Right cardiac atrium (tissue), 5 donors: ENCODE measurements at regions of chr1 and their contacts with region 1.

Region 1: GRCh38 chr1:53014791-53015507 is 47.1 kb upstream of the PODN start:
- DNase-seq: peak; percentile 75 to 82 (median 82)
- ATAC-seq: peak; percentile 96 to 97
- H3K4me3 ChIP-seq: peak overlapping the region; percentile 96
- H3K27ac ChIP-seq: peak overlapping the region; percentile 66
- H3K4me1 ChIP-seq: peaks cover 2% of the 10 kb centered on the region
- H3K27me3 ChIP-seq: no peaks in the 10 kb centered on the region

Region 2: DNA sequence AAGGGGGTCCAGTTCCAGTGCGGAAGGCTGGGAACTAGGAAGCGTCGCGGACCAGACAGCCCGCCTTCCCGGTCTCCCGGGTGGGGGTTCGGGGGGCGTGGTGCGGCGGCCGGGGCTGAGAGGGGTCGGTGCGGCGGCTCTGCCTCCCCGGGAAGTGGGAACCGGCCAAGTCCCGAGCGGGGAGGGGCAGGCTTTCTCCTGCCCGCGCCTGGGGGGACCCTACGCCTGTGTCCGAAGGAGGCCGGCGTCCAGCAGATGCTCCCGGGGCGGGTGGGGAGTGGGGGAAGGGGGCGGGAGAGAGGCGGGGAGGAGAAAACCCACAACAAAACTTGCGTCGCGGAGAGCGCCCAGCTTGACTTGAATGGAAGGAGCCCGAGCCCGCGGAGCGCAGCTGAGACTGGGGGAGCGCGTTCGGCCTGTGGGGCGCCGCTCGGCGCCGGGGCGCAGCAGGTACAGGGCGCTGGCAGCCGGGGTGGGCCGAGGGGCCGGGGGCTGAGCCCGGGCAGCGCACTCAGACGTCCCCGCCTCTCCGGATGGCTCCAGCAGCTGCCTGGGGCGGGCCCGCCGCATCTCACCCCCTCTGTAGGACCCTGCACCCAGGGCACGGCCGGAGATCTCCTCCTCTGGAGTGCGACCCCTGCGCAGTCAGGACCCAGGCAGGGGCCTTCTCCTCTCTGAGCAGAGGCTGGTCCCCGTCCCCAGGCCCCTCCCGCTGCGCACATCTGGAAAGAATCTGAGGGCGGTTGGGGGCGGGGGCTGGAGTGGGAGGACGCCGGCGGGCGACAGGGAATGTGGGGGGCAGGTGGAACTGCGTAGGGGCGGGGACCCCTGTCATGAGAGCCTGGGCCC is 47.1 kb after region 1 on chr1 and contains the start of gene PODN:
- intact Hi-C with region 1: loop called in 1 of 4 experiments (anchors 10 kb)
- DNase-seq: peak; percentile 70 to 89 (median 83)
- ATAC-seq: peak; percentile 48 to 61
- H3K4me3 ChIP-seq: peak within 1 kb of the TSS; percentile 66
- H3K27ac ChIP-seq: peak within 1 kb of the TSS; percentile 6
- H3K4me1 ChIP-seq: peaks cover under 1% of the 10 kb centered on the region
- H3K27me3 ChIP-seq: no peaks in the 10 kb centered on the region
- total RNA-seq, gene PODN: 36.5 to 62.4 (median 48.9) TPM

Region 3: GRCh38 chr1:53145942-53146708 is 131.2 kb after region 1 on chr1:
- intact Hi-C with region 1: no loop called
- DNase-seq: peak; percentile 75 to 80 (median 77)
- ATAC-seq: peak; percentile 83 to 94
- H3K4me3 ChIP-seq: no peak overlapping the region
- H3K27ac ChIP-seq: peak overlapping the region; percentile 54
- H3K4me1 ChIP-seq: peaks cover 5% of the 10 kb centered on the region
- H3K27me3 ChIP-seq: no peaks in the 10 kb centered on the region